Naive thymus-derived CD4-positive, alpha-beta T cell (primary cell): ENCODE measurements at regions of chr13 and their contacts with region 1.

Region 1: GRCh38 chr13:27919934-27920676 is at the start of gene PDX1:
- DNase-seq: peak in 1 of 9 donors; percentile 24
- ATAC-seq: peak; percentile 46
- H3K4me3 ChIP-seq: peak within 1 kb of the TSS; percentile 9
- H3K4me3 Mint-ChIP-seq: peak within 1 kb of the TSS; percentile 57 to 85 (median 74)
- H3K27ac ChIP-seq: no peak within 1 kb of the TSS
- H3K27ac Mint-ChIP-seq: peak within 1 kb of the TSS in 1 of 9 donors; percentile 68
- H3K4me1 ChIP-seq: peaks cover 0 to 16% of the 10 kb centered on the region in 2 donors
- H3K4me1 Mint-ChIP-seq: peaks cover 9 to 49% (median 41%) of the 10 kb centered on the region in 7 donors
- H3K27me3 ChIP-seq: peaks cover 6 to 20% of the 10 kb centered on the region in 2 donors
- H3K27me3 Mint-ChIP-seq: peaks cover 75 to 86% (median 78%) of the 10 kb centered on the region in 5 donors
- total RNA-seq, gene PDX1: not detected

Region 2: GRCh38 chr13:27960362-27961226 is 40.5 kb after region 1 on chr13:
- CTCF ChIA-PET with region 1: no interaction called
- POLR2A ChIA-PET with region 1: no interaction called
- intact Hi-C with region 1: loop called in 1 of 2 experiments (anchors 2 kb)
- DNase-seq: no peak
- ATAC-seq: peak; percentile 36
- H3K4me3 ChIP-seq: no peak overlapping the region
- H3K4me3 Mint-ChIP-seq: peak overlapping the region in 9 of 10 donors; percentile 4 to 73 (median 52)
- H3K27ac ChIP-seq: no peak overlapping the region
- H3K27ac Mint-ChIP-seq: no peak overlapping the region
- H3K4me1 ChIP-seq: no peaks in the 10 kb centered on the region
- H3K4me1 Mint-ChIP-seq: peaks cover 0 to 12% (median 9%) of the 10 kb centered on the region in 7 donors
- H3K27me3 ChIP-seq: peaks cover 0 to 32% of the 10 kb centered on the region in 2 donors
- H3K27me3 Mint-ChIP-seq: peaks cover 71 to 91% (median 82%) of the 10 kb centered on the region in 5 donors

Region 3: GRCh38 chr13:27968316-27969081 is 48.4 kb after region 1 on chr13:
- CTCF ChIA-PET with region 1: no interaction called
- POLR2A ChIA-PET with region 1: no interaction called
- intact Hi-C with region 1: loop called in 1 of 2 experiments (anchors 2 kb)
- DNase-seq: no peak
- ATAC-seq: no peak
- H3K4me3 ChIP-seq: no peak overlapping the region
- H3K4me3 Mint-ChIP-seq: peak overlapping the region in 3 of 10 donors; percentile 16 to 73 (median 62)
- H3K27ac ChIP-seq: no peak overlapping the region
- H3K27ac Mint-ChIP-seq: no peak overlapping the region
- H3K4me1 ChIP-seq: no peaks in the 10 kb centered on the region
- H3K4me1 Mint-ChIP-seq: peaks cover 6 to 30% (median 21%) of the 10 kb centered on the region in 7 donors
- H3K27me3 ChIP-seq: peaks cover 5 to 7% of the 10 kb centered on the region in 2 donors
- H3K27me3 Mint-ChIP-seq: peaks cover 67 to 87% (median 79%) of the 10 kb centered on the region in 5 donors

Region 4: DNA sequence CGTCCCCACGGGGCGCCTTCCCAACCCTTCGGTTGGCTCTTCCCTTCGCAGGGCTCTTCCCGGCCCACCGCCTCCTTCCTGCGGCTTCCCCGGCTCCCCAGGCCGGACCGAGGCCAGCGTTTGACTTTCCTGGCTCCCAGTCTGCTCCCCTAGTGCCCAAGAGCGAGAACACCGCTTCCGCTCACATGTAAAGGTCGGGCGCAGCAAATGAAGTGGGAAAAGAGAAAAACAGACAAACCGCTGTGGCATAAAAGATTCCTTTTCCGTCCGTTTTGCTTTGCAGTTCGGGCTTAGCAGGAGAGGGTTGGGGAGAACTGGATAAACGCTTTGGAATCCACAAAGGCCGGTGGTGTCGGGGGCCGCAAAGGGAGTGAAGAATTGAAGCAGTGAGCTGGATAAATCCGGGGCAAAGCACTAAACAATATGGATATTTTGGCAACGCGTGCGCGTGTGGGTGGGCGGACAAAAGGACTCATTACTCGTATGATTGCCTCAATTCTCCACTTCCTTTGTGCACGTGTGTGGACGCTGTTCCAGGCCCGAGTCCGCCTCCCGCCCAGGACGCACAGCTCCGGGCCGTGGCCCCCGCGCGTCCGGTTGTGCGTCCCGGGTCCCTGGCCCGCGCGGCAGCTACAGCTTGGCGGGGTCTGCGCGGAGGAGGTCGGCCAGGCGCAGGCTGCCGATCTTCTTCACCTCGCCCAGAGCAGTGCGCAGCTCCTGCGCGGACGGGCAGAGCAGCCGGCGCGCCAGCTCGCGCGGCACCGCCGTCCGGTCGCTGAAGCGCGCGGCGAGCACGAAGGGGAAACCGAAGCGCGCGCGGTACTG is 57.6 kb after region 1 on chr13:
- CTCF ChIA-PET with region 1: no interaction called
- POLR2A ChIA-PET with region 1: no interaction called
- intact Hi-C with region 1: loop called in 1 of 2 experiments (anchors 2 kb)
- DNase-seq: no peak
- ATAC-seq: no peak
- H3K4me3 ChIP-seq: no peak overlapping the region
- H3K4me3 Mint-ChIP-seq: peak overlapping the region in 5 of 10 donors; percentile 9 to 54 (median 12)
- H3K27ac ChIP-seq: no peak overlapping the region
- H3K27ac Mint-ChIP-seq: peak overlapping the region in 1 of 9 donors; percentile 71
- H3K4me1 ChIP-seq: no peaks in the 10 kb centered on the region
- H3K4me1 Mint-ChIP-seq: peaks cover 10 to 33% (median 25%) of the 10 kb centered on the region in 7 donors
- H3K27me3 ChIP-seq: peaks cover 10 to 20% of the 10 kb centered on the region in 2 donors
- H3K27me3 Mint-ChIP-seq: peaks cover 81 to 92% (median 88%) of the 10 kb centered on the region in 5 donors